ENCODE measurements at regions of chr2 and their contacts with region 1.

Region 1: GRCh38 chr2:191869178-191869577 is 22.3 kb upstream of the CAVIN2 start:
- DNase-seq: peak; percentile 13
- H3K4me3 Mint-ChIP-seq: no peak overlapping the region
- H3K27ac Mint-ChIP-seq: no peak overlapping the region
- H3K4me1 Mint-ChIP-seq: no peaks in the 10 kb centered on the region
- H3K27me3 Mint-ChIP-seq: peaks cover 16% of the 10 kb centered on the region

Region 2: DNA sequence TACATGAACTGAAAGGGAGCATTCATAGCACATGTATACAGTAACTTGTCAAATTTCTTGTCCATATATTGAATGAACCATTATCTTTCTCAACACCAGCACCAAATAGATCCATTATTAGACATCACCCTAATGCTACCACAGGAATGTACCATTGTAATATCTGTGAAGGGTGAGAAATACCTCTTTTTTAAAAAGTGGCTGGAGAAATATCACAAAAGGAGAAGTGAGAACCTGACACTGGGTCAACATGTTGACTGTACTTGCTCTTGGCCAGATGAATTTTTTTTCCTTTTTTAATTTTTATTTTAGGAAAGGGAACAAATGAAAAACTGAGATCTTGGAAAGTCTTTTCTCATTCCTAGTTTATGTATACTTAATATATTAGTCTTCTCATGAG is 85.8 kb before region 1 on chr2:
- CTCF ChIA-PET with region 1: no interaction called
- POLR2A ChIA-PET with region 1: no interaction called
- intact Hi-C with region 1: no loop called
- DNase-seq: no peak
- H3K4me3 Mint-ChIP-seq: no peak overlapping the region
- H3K27ac Mint-ChIP-seq: no peak overlapping the region
- H3K4me1 Mint-ChIP-seq: no peaks in the 10 kb centered on the region
- H3K27me3 Mint-ChIP-seq: peaks cover 1% of the 10 kb centered on the region

Region 3: DNA sequence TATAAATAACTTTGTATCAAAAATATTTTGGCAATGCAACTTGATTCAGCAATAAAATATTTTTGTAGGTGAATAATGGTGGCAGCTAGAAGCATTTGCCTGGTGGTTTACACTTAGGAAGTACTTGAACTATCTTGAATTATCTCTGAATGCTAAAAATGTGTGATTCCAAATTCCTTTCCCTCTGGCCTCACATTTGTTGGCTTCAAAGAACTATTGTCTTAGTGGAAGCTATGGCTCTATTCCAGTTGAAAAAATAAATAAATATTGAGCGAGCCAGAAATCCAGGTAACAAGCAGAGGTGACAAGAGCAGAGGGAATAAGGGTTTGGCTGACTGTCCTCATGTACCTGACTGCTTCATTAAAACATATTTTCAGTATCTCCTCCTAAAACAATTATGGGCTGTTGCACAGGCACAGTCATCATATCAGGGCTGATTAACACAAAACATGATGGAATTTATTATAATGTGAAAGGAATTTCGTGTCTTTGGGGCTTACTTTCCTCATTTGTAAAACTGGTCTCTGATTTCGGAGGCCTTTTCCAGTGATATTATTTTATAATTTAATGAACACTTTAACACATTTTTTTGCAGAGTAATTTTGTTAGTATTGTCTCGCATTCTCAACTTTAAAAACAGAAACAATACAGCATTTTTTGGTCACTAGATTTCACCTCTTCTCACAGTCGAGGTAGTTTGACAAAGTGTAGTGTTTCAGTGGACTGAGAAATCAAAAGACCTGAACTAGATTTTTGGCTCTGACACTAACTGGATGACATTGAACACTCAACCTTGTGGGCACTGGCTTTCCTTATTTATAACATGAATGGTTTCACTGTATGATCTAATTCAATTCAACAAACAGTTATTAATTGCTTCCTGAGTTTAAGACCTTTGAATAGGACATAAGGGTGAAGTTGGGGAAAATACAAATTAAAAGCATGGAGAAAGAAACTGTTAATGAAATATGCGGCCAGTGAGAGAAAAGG is 14.5 kb before region 1 on chr2:
- CTCF ChIA-PET with region 1: no interaction called
- POLR2A ChIA-PET with region 1: no interaction called
- intact Hi-C with region 1: no loop called
- DNase-seq: no peak
- H3K4me3 Mint-ChIP-seq: no peak overlapping the region
- H3K27ac Mint-ChIP-seq: no peak overlapping the region
- H3K4me1 Mint-ChIP-seq: no peaks in the 10 kb centered on the region
- H3K27me3 Mint-ChIP-seq: peaks cover 14% of the 10 kb centered on the region

Region 4: DNA sequence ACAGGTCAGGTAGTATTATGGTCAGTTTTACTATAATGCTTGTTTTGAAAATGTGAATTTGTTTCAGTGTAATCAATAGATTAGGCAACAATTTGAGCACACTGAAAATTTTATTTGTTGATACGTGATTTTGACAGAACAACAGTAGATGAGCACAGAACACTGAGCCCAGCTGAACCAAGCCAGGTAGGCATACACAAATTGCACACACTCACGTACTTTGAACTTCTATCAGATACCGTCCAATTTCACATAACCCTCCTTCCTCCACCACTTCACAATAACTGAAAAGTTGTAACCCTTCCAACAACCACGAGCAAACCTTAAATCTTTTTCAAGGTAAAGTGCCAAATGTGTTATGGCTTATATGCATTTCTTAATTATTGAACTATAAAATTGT is 555.1 kb after region 1 on chr2:
- CTCF ChIA-PET with region 1: no interaction called
- POLR2A ChIA-PET with region 1: no interaction called
- intact Hi-C with region 1: loop called (anchors 5 kb)
- DNase-seq: no peak
- H3K4me3 Mint-ChIP-seq: no peak overlapping the region
- H3K27ac Mint-ChIP-seq: no peak overlapping the region
- H3K4me1 Mint-ChIP-seq: no peaks in the 10 kb centered on the region
- H3K27me3 Mint-ChIP-seq: no peaks in the 10 kb centered on the region

Measured in activated CD4-positive, alpha-beta memory T cell treated with anti-CD3 and anti-CD28 coated beads for 36 hours (primary cell).